Right ventricle myocardium inferior (tissue), 1 donor: ENCODE measurements at regions of chr2 and their contacts with region 1.

Region 1: DNA sequence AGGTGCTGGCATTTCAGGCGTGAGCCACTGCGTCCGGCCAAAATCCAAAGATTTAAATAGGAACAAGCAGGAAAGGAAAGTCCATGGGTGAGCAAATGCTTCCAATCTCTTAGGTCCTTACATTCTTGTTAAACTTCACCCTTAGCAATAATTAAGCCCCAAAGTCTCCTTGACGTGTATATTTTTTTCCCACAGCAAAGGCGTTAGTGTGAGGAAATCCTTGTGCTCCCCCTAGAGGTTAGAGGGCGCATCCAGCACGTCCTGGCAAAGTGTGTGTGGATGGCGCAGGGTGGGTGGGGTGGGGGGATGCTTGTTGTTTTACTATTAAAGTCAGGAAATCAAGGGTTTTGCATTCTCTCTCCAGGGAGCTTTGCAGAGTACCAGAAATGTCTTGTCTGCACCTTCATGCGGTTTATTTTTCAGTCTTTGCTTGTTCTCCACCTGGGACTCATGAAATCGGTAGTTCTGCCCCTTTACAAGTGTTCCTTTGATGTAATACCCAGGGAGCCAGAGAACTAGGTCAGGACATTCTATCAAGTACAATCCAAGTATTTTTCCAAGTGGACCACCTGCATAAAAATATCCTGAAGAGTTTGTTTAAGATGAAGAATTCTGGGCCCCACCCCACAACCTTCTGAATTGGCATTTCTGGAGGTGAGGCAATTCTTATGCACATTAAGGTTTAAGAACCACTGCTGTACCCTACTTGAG is 22.2 kb upstream of the ITSN2 start:
- DNase-seq: no peak
- ATAC-seq: peak; percentile 88

Region 2: GRCh38 chr2:24228470-24228869 is 154.0 kb before region 1 on chr2:
- intact Hi-C with region 1: loop called (anchors 5 kb)
- DNase-seq: no peak
- ATAC-seq: no peak

Region 3: GRCh38 chr2:24304098-24304497 is 78.4 kb before region 1 on chr2:
- intact Hi-C with region 1: loop called (anchors 5 kb)
- DNase-seq: peak; percentile 75
- ATAC-seq: peak; percentile 99